Caco-2 (cell line): ENCODE measurements at regions of chr3 and their contacts with region 1.

Region 1: GRCh38 chr3:134299185-134299887 is 48.7 kb upstream of the RYK start:
- DNase-seq: peak in 1 of 2 experiments; percentile 45
- H3K4me3 ChIP-seq: no peak overlapping the region
- H3K4me3 Mint-ChIP-seq: no peak overlapping the region
- H3K27ac Mint-ChIP-seq: no peak overlapping the region
- H3K4me1 ChIP-seq: no peaks in the 10 kb centered on the region
- H3K4me1 Mint-ChIP-seq: peaks cover 6% of the 10 kb centered on the region
- H3K27me3 ChIP-seq: no peaks in the 10 kb centered on the region
- H3K27me3 Mint-ChIP-seq: no peaks in the 10 kb centered on the region
- CTCF ChIP-seq: peak; percentile 39 to 52

Region 2: DNA sequence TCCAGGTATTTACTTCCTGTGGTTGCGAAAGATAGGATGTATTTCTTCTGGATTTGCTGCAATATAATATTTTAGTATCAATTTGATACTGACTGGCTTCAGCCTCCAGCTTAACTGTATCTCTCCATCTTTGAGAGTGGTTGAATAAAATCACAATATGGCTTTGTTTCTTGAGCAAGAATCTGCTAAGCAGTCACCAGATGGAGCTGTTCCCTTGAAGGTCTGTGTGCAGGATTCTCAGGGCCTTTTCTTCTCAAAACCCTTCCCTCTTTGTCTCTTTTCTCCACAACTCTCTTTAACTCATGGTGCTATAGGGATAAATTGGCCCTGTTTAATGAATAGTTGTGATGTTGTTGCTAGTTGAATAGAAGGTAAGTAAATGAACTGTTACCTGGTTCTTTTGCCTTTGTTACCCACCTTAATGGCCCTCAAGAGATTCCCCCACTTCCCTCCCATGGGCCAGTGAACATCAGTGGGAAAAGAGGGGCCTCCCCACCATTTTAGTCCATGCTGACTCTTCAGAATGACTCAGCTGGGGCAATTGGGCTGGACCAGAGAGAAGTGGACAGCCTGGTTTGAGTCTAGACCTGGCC is 368.9 kb before region 1 on chr3:
- CTCF ChIA-PET with region 1: no interaction called
- POLR2A ChIA-PET with region 1: no interaction called
- intact Hi-C with region 1: loop called (anchors 1 kb)
- DNase-seq: peak in 1 of 2 experiments; percentile 49
- H3K4me3 ChIP-seq: no peak overlapping the region
- H3K4me3 Mint-ChIP-seq: no peak overlapping the region
- H3K27ac Mint-ChIP-seq: no peak overlapping the region
- H3K4me1 ChIP-seq: no peaks in the 10 kb centered on the region
- H3K4me1 Mint-ChIP-seq: no peaks in the 10 kb centered on the region
- H3K27me3 ChIP-seq: no peaks in the 10 kb centered on the region
- H3K27me3 Mint-ChIP-seq: no peaks in the 10 kb centered on the region
- CTCF ChIP-seq: peak; percentile 64 to 75

Region 3: GRCh38 chr3:134126153-134126552 is 173.2 kb before region 1 on chr3:
- CTCF ChIA-PET with region 1: interaction called, 6 read pairs
- POLR2A ChIA-PET with region 1: no interaction called
- intact Hi-C with region 1: loop called (anchors 1 kb)
- DNase-seq: no peak
- H3K4me3 ChIP-seq: no peak overlapping the region
- H3K4me3 Mint-ChIP-seq: no peak overlapping the region
- H3K27ac Mint-ChIP-seq: no peak overlapping the region
- H3K4me1 ChIP-seq: peaks cover 8% of the 10 kb centered on the region; the same call in 1 of the 2 replicates
- H3K4me1 Mint-ChIP-seq: peaks cover 9% of the 10 kb centered on the region
- H3K27me3 ChIP-seq: no peaks in the 10 kb centered on the region
- H3K27me3 Mint-ChIP-seq: no peaks in the 10 kb centered on the region
- CTCF ChIP-seq: peak in 1 of 2 experiments; percentile 19

Region 4: GRCh38 chr3:134163096-134163495 is 136.2 kb before region 1 on chr3:
- CTCF ChIA-PET with region 1: interaction called, 12 read pairs
- POLR2A ChIA-PET with region 1: no interaction called
- intact Hi-C with region 1: no loop called
- DNase-seq: no peak
- H3K4me3 ChIP-seq: no peak overlapping the region
- H3K4me3 Mint-ChIP-seq: no peak overlapping the region
- H3K27ac Mint-ChIP-seq: no peak overlapping the region
- H3K4me1 ChIP-seq: peaks cover 12% of the 10 kb centered on the region; the same call in 1 of the 2 replicates
- H3K4me1 Mint-ChIP-seq: peaks cover 23% of the 10 kb centered on the region
- H3K27me3 ChIP-seq: no peaks in the 10 kb centered on the region
- H3K27me3 Mint-ChIP-seq: no peaks in the 10 kb centered on the region
- CTCF ChIP-seq: no peak

Region 5: GRCh38 chr3:134197681-134198261 is 101.6 kb before region 1 on chr3:
- CTCF ChIA-PET with region 1: interaction called, 5 read pairs
- POLR2A ChIA-PET with region 1: no interaction called
- intact Hi-C with region 1: loop called (anchors 1 kb)
- DNase-seq: peak in 1 of 2 experiments; percentile 47
- H3K4me3 ChIP-seq: no peak overlapping the region
- H3K4me3 Mint-ChIP-seq: no peak overlapping the region
- H3K27ac Mint-ChIP-seq: no peak overlapping the region
- H3K4me1 ChIP-seq: no peaks in the 10 kb centered on the region
- H3K4me1 Mint-ChIP-seq: no peaks in the 10 kb centered on the region
- H3K27me3 ChIP-seq: no peaks in the 10 kb centered on the region
- H3K27me3 Mint-ChIP-seq: no peaks in the 10 kb centered on the region
- CTCF ChIP-seq: peak; percentile 70 to 71

Region 6: GRCh38 chr3:134242649-134243617 is 56.4 kb before region 1 on chr3:
- CTCF ChIA-PET with region 1: interaction called, 4 read pairs
- POLR2A ChIA-PET with region 1: no interaction called
- intact Hi-C with region 1: loop called (anchors 5 kb)
- DNase-seq: peak; percentile 78
- H3K4me3 ChIP-seq: no peak overlapping the region
- H3K4me3 Mint-ChIP-seq: peak overlapping the region; percentile 52
- H3K27ac Mint-ChIP-seq: peak overlapping the region; percentile 56
- H3K4me1 ChIP-seq: peaks cover 56% of the 10 kb centered on the region
- H3K4me1 Mint-ChIP-seq: peaks cover 61% of the 10 kb centered on the region
- H3K27me3 ChIP-seq: no peaks in the 10 kb centered on the region
- H3K27me3 Mint-ChIP-seq: no peaks in the 10 kb centered on the region
- CTCF ChIP-seq: no peak

Region 7: GRCh38 chr3:134250717-134251220 is 48.6 kb before region 1 on chr3 and contains the start of gene RYK:
- CTCF ChIA-PET with region 1: no interaction called
- POLR2A ChIA-PET with region 1: no interaction called
- intact Hi-C with region 1: loop called (anchors 2 kb)
- DNase-seq: peak; percentile 93 to 95
- H3K4me3 ChIP-seq: peak within 1 kb of the TSS; percentile 88
- H3K4me3 Mint-ChIP-seq: peak within 1 kb of the TSS; percentile 85
- H3K27ac Mint-ChIP-seq: peak within 1 kb of the TSS; percentile 86
- H3K4me1 ChIP-seq: peaks cover 36% of the 10 kb centered on the region
- H3K4me1 Mint-ChIP-seq: peaks cover 37% of the 10 kb centered on the region
- H3K27me3 ChIP-seq: no peaks in the 10 kb centered on the region
- H3K27me3 Mint-ChIP-seq: no peaks in the 10 kb centered on the region
- CTCF ChIP-seq: no peak
- total RNA-seq, gene RYK: 101 and 102 TPM in 2 replicates